ENCODE measurements at regions of chr10 and their contacts with region 1.

Region 1: DNA sequence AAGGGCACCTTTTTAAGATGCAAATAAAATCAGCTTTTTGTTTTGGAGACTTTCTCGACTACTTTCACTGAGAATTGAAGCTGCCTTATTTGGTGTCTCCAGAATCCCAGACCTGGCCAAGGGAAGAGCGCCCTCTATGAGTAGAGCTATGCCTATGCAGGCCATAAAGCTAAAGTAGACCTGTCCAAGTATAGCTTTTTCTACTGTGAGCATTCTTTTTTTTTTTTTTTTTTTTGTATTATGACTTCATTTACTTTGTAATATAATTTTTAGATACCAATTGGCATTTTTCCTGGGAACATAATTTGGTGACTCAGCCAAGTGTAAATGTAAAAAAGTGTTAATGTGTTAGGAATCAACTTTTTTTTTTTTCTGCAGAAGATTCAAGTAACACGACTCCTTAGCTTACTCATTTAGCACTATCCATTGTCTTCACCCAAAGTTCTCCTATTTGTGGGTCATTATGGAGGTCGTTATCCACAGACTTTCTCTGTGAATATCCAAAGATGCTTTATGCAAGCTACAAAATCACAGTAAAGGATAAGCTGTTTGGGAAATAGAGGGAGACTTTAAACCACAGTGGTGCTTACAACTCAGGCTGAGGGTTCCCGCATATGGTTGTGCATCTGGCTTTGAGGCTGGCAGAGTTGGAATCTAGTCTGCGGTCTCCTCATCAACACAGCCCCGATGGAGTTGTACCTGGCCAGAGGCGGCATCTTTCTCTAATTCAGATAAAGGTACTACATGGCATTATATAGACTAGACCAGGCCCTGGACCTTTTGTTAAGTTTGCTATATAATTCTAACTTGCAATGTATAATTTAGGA is 1040.2 kb upstream of the SORCS1 start:
- DNase-seq: no peak
- H3K4me3 ChIP-seq: no peak overlapping the region
- H3K27ac ChIP-seq: no peak overlapping the region
- H3K4me1 ChIP-seq: no peaks in the 10 kb centered on the region
- H3K27me3 ChIP-seq: no peaks in the 10 kb centered on the region
- CTCF ChIP-seq: no peak
- POLR2A ChIP-seq: no peak

Region 2: GRCh38 chr10:106535304-106535964 is 1669.3 kb before region 1 on chr10:
- intact Hi-C with region 1: no loop called
- DNase-seq: no peak
- H3K4me3 ChIP-seq: no peak overlapping the region
- H3K27ac ChIP-seq: no peak overlapping the region
- H3K4me1 ChIP-seq: no peaks in the 10 kb centered on the region
- H3K27me3 ChIP-seq: no peaks in the 10 kb centered on the region
- CTCF ChIP-seq: no peak
- POLR2A ChIP-seq: no peak

Region 3: GRCh38 chr10:108166401-108166800 is 38.3 kb before region 1 on chr10:
- intact Hi-C with region 1: no loop called
- DNase-seq: no peak
- H3K4me3 ChIP-seq: no peak overlapping the region
- H3K27ac ChIP-seq: no peak overlapping the region
- H3K4me1 ChIP-seq: no peaks in the 10 kb centered on the region
- H3K27me3 ChIP-seq: no peaks in the 10 kb centered on the region
- CTCF ChIP-seq: no peak
- POLR2A ChIP-seq: no peak

Region 4: GRCh38 chr10:108544494-108545120 is 339.9 kb after region 1 on chr10:
- intact Hi-C with region 1: no loop called
- DNase-seq: peak; percentile 21 to 58
- H3K4me3 ChIP-seq: no peak overlapping the region
- H3K27ac ChIP-seq: no peak overlapping the region
- H3K4me1 ChIP-seq: no peaks in the 10 kb centered on the region
- H3K27me3 ChIP-seq: no peaks in the 10 kb centered on the region
- CTCF ChIP-seq: peak in 2 of 3 donors; percentile 49 to 61
- POLR2A ChIP-seq: no peak

Region 5: DNA sequence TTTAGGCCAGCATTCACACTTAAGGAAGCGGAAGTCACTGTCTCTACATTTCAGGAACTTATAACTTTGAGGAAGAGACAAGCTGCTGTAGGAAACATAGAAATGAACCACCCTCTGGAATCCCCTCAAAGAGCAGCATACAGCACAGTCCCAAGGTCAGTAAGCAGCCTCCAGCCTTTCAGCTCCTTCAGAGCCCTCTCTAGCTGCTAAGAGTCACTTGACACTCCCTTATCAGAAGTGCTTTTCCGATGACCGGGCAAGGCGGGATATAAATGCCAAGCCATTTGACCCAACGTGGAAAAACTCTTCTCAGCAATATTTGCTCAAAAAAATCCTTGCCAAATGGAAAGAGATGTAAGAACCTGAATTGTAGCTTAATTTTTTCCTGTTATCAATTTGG is 434.3 kb after region 1 on chr10:
- intact Hi-C with region 1: loop called (anchors 5 kb)
- DNase-seq: no peak
- H3K4me3 ChIP-seq: no peak overlapping the region
- H3K27ac ChIP-seq: no peak overlapping the region
- H3K4me1 ChIP-seq: no peaks in the 10 kb centered on the region
- H3K27me3 ChIP-seq: no peaks in the 10 kb centered on the region
- CTCF ChIP-seq: no peak
- POLR2A ChIP-seq: no peak

Region 6: DNA sequence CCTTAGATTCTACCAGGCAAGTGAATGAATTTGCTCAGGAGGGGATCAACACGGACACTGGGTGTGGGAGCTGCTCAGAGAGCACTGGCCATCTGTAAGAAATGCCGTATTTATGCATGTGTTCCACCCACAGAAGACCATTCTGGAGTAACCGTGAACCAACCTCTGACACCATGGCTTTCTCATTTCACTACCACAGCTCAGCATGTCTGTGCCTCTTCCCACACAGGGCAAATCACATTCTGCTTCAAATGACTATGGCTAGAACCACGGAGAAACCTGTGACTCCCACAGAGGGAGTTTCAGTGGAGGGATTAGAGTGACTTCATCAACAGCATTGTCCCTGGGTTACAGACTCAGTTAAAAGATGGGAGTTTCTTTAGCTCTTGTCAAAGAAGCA is 825.2 kb after region 1 on chr10:
- intact Hi-C with region 1: loop called (anchors 5 kb)
- DNase-seq: no peak
- H3K4me3 ChIP-seq: no peak overlapping the region
- H3K27ac ChIP-seq: no peak overlapping the region
- H3K4me1 ChIP-seq: no peaks in the 10 kb centered on the region
- H3K27me3 ChIP-seq: no peaks in the 10 kb centered on the region
- CTCF ChIP-seq: no peak
- POLR2A ChIP-seq: no peak